ENCODE measurements at regions of chr3 and their contacts with region 1.

Region 1: GRCh38 chr3:49786241-49786958 is at the start of gene IP6K1:
- DNase-seq: peak; percentile 100
- ATAC-seq: peak; percentile 100
- H3K4me3 Mint-ChIP-seq: peak within 1 kb of the TSS; percentile 90
- H3K27ac Mint-ChIP-seq: peak within 1 kb of the TSS; percentile 96
- H3K4me1 Mint-ChIP-seq: peaks cover 37% of the 10 kb centered on the region
- H3K27me3 Mint-ChIP-seq: no peaks in the 10 kb centered on the region
- total RNA-seq, gene IP6K1: 29.1 to 31.0 TPM

Region 2: DNA sequence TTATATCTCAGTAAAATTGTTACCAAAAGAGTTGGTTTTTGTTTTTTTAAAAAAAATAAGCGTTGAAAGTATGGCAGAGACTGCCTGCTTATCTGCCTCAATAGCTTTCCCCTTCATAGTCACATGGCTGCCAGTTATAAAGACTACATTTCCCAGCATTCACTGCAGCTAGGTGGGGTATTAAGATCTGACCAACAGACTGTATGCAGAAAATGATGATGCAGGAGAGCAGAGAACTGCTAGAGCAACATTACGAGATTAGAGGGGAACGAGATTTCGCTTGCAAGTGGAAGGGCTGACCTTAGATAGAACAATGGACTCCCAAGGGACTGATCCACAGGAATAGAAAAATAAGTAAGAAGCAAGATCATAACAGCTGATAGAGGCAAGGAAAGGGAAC is 388.9 kb before region 1 on chr3:
- CTCF ChIA-PET with region 1: no interaction called
- POLR2A ChIA-PET with region 1: no interaction called
- intact Hi-C with region 1: no loop called
- DNase-seq: no peak
- ATAC-seq: peak; percentile 61
- H3K4me3 Mint-ChIP-seq: no peak overlapping the region
- H3K27ac Mint-ChIP-seq: no peak overlapping the region
- H3K4me1 Mint-ChIP-seq: peaks cover 64% of the 10 kb centered on the region
- H3K27me3 Mint-ChIP-seq: no peaks in the 10 kb centered on the region

Region 3: GRCh38 chr3:49689046-49689907 is 97.1 kb before region 1 on chr3 and contains the starts of genes MST1 and RNF123:
- CTCF ChIA-PET with region 1: no interaction called
- POLR2A ChIA-PET with region 1: no interaction called
- intact Hi-C with region 1: loop called in 1 of 2 experiments (anchors 1 kb)
- DNase-seq: peak; percentile 95
- ATAC-seq: peak; percentile 74
- H3K4me3 Mint-ChIP-seq: peak within 1 kb of the TSS; percentile 90
- H3K27ac Mint-ChIP-seq: peak within 1 kb of the TSS; percentile 90
- H3K4me1 Mint-ChIP-seq: peaks cover 30% of the 10 kb centered on the region
- H3K27me3 Mint-ChIP-seq: no peaks in the 10 kb centered on the region
- total RNA-seq, gene MST1: 8.7 to 9.7 TPM
- total RNA-seq, gene RNF123: 25.2 to 32.7 TPM

Region 4: DNA sequence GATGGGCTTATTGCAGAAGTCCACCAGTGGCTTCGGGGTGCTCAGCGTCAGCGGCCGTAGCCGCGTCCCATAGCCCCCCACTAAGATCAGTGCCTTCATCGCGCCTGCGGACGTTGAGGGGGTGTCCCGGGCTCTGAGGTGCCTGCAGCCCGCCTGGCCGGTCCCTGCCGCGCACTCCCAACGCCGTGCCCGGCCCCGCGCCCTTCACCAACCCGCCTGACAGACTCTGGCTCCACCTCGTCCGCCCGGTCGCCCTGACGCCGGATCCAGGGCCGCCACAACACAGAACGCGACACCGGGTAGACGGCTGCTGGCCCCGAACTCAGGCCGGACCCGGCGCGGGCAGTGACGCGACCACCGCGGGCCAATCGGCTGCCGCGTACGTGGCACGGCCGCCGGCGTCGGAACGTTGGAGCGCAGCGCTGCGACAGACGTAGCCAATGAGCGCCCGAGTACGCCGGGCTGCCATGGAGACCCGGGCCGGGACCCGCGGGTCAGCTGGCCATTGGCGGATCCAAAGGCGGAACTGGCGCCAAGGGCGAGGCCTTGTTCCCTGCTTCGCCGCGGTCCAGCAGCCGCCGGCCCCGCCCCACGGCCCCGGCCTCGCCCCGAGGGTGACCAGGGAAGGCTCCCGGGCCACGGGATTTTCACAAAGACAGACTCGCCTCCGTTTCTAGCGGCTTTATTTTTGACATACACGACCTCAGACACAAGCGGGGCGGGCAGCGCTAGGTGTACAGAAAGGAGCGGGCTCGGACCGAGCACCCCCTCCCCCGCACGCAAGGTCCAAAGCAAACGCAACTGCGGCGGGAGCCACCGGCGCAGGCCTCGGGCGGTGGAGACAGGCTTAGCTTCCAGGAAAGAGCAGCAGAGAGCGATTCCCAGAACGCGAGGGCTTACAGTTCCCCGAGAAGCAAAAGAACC is 62.5 kb before region 1 on chr3 and contains the start of gene GMPPB:
- CTCF ChIA-PET with region 1: no interaction called
- POLR2A ChIA-PET with region 1: no interaction called
- intact Hi-C with region 1: loop called (anchors 1 to 5 kb)
- DNase-seq: peak; percentile 97
- ATAC-seq: peak; percentile 87
- H3K4me3 Mint-ChIP-seq: peak within 1 kb of the TSS; percentile 92
- H3K27ac Mint-ChIP-seq: peak within 1 kb of the TSS; percentile 96
- H3K4me1 Mint-ChIP-seq: peaks cover 22% of the 10 kb centered on the region
- H3K27me3 Mint-ChIP-seq: no peaks in the 10 kb centered on the region
- total RNA-seq, gene GMPPB: 21.0 to 32.1 TPM

Region 5: DNA sequence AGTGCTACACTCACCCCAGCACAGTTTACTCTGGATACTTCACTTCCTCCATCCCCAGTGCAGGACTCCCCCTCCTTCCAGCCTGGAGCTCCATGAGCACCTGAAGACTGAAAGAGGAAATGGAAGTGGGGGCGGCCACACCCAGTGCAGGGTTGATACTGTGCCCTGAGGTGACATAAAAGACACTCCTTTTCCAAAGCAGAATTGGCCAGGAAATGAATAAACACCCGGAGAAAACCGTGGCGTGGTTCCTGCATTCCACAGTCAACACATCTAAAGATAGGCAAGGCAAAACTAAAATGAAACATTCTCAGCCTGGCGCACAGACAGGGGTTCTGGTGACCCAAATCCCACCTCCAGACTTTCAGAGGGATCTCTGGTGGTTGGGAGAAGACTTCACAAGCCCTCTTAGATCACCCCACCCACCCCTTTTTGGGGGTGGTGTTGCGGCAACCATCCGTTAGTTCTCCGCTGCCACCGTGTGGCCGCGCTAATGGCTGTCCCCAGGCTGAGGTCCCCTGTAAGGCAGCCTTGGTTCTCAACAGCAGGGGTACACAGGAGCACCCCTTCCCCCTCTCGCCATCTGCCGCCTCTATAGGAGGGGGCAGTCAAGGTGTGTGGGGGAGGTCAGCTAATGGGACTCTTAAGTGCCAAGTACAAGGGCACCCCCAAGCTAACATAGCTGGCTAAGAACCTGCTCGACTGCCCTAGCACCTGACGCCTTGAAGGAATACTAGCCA is 119.8 kb after region 1 on chr3:
- CTCF ChIA-PET with region 1: no interaction called
- POLR2A ChIA-PET with region 1: no interaction called
- intact Hi-C with region 1: loop called in 1 of 2 experiments (anchors 5 kb)
- DNase-seq: peak; percentile 77
- ATAC-seq: peak; percentile 45
- H3K4me3 Mint-ChIP-seq: peak overlapping the region; percentile 8
- H3K27ac Mint-ChIP-seq: peak overlapping the region; percentile 48
- H3K4me1 Mint-ChIP-seq: peaks cover 22% of the 10 kb centered on the region
- H3K27me3 Mint-ChIP-seq: no peaks in the 10 kb centered on the region

Region 6: DNA sequence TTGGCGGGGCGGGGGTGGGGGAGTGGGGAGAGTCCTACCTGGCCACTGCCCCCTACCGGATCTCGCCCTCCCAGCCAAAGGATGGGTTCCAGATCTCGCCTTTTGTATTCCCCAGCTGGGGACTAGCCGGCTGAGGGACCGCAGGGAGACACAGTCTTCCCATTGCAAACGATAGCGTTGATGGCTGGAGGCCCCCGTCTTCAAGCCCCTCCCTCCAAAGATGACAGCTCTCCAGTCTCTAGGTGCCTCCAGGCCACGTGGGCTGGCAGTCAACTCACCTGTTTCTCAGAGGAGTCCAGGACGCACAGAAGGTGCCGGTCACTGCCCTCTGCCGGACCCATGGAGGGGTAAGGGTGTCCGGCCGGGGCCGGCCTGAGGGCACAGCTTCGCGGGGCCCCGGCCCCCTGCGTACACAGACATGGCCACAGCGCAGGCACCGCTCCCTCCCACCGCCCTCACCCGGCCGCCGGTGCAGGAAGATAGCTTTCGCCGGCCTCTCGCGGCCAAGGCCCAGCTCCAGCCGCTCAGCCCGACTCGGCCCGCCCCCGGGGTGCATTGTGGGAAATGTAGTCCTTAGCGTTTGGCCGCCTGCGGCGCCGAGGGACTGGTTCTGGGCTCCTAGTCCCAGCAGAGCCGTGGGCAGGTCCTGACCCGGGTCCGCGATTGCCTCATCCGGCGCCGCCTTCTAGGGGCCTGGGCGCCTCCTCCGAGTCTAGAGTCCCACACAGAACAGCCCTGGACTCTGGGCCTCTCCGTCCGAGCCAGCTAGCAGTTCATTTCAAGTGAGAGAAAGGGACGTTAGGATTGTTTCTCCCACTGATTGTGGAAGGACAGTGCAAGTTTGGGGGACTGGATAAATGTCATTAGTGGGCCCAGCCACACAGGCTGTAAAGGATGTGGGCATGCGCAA is 143.2 kb after region 1 on chr3 and contains the start of gene MON1A:
- CTCF ChIA-PET with region 1: interaction called, 3 read pairs
- POLR2A ChIA-PET with region 1: no interaction called
- intact Hi-C with region 1: loop called in 1 of 2 experiments (anchors 1 kb)
- DNase-seq: peak; percentile 92
- ATAC-seq: peak; percentile 97
- H3K4me3 Mint-ChIP-seq: peak within 1 kb of the TSS; percentile 85
- H3K27ac Mint-ChIP-seq: peak within 1 kb of the TSS; percentile 90
- H3K4me1 Mint-ChIP-seq: peaks cover 19% of the 10 kb centered on the region
- H3K27me3 Mint-ChIP-seq: no peaks in the 10 kb centered on the region
- total RNA-seq, gene MON1A: 7.5 to 8.3 TPM

Region 7: DNA sequence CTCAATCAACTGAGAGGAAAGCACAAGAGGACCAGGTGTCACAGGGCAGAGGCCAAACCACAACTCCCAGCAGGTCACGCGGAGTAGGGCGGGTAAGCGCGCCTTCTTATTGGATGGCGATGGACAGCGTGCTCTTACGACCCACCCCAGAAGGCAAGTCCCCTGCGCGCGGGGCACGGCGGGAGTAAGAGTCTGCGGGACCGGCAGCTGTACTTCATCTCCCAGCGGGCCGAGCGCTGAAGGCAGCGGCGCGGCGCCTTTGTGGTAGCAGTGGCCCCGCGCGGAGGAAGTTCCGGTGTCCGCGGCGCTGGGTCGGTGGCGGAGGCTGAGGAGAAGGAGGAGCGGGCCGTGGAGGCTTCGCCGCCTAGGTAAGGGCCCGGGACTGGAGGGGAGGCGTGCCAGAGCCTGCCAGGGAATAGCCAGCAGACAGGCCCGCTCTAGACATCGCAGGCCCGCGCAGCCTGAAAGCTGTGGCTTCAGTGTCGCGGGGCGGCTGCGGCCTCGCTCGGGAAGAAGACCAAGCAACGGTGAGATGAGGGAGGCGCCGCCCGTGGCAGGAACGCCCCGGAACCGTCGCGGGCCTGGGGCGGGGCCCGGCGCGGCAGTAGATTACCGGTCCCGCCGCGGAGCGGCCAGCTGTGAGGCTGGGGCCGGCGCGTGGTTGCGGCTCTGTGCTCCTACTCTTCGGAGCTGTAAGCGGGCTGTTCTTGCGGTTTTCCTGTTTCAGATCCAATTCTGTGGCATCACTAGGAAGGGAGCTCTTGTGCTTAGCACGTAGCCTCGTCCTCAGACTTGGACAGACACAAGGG is 153.7 kb after region 1 on chr3 and contains the start of gene RBM6:
- CTCF ChIA-PET with region 1: no interaction called
- POLR2A ChIA-PET with region 1: no interaction called
- intact Hi-C with region 1: loop called in 1 of 2 experiments (anchors 1 kb)
- DNase-seq: peak; percentile 98
- ATAC-seq: peak; percentile 99
- H3K4me3 Mint-ChIP-seq: peak within 1 kb of the TSS; percentile 98
- H3K27ac Mint-ChIP-seq: peak within 1 kb of the TSS; percentile 91
- H3K4me1 Mint-ChIP-seq: peaks cover 20% of the 10 kb centered on the region
- H3K27me3 Mint-ChIP-seq: no peaks in the 10 kb centered on the region
- total RNA-seq, gene RBM6: 69.3 to 75.1 TPM

Region 8: DNA sequence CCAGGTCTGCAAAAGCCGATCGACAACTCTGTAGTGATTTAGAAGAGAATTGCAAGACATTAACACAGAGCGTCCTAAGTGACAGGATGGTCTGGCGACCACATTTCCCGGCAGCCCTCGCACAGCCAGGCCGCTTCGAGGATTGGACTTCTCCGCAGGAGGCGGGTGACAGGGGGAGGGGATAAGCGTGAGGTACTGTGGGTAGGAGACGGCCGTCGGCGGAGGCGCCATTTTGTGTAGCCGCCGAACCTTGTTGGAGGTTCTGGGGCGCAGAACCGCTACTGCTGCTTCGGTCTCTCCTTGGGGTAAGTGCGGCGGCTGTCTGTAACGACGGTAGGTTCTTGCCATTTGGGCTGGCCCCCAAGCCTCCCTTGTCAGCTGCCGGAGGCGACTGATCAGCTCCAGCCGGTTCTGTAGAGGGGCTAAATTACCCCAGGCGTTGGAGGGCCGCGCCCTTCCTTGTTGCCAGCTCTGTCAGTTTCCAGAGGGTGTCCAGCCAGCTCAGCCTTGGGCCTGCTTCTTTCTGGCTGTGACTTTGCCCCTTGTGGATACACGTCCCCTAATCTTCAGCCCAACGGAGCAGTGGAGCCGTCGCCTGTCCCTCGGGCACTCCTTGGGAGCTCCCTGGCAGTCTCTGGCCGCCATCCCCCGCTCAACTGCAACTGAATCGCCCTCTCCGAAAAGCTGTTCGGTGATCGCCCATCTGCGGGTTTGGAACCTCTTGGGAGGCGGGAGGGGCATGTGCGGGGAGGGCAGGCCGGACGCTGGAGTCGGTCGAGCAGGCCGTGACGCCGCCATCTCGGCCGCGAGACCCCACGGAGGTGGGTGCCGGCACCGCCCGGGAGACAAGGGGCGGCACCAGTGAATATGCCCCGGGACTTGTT is 302.6 kb after region 1 on chr3 and contains the start of gene RBM5:
- CTCF ChIA-PET with region 1: no interaction called
- POLR2A ChIA-PET with region 1: interaction called, 5 read pairs
- intact Hi-C with region 1: loop called in 1 of 2 experiments (anchors 1 kb)
- DNase-seq: peak; percentile 97
- ATAC-seq: peak; percentile 100
- H3K4me3 Mint-ChIP-seq: peak within 1 kb of the TSS; percentile 99
- H3K27ac Mint-ChIP-seq: peak within 1 kb of the TSS; percentile 97
- H3K4me1 Mint-ChIP-seq: peaks cover 28% of the 10 kb centered on the region
- H3K27me3 Mint-ChIP-seq: no peaks in the 10 kb centered on the region
- total RNA-seq, gene RBM5: 118 to 131 TPM